Heart left ventricle (tissue), 16 donors: ENCODE measurements at regions of chr1 and their contacts with region 1.

Region 1: DNA sequence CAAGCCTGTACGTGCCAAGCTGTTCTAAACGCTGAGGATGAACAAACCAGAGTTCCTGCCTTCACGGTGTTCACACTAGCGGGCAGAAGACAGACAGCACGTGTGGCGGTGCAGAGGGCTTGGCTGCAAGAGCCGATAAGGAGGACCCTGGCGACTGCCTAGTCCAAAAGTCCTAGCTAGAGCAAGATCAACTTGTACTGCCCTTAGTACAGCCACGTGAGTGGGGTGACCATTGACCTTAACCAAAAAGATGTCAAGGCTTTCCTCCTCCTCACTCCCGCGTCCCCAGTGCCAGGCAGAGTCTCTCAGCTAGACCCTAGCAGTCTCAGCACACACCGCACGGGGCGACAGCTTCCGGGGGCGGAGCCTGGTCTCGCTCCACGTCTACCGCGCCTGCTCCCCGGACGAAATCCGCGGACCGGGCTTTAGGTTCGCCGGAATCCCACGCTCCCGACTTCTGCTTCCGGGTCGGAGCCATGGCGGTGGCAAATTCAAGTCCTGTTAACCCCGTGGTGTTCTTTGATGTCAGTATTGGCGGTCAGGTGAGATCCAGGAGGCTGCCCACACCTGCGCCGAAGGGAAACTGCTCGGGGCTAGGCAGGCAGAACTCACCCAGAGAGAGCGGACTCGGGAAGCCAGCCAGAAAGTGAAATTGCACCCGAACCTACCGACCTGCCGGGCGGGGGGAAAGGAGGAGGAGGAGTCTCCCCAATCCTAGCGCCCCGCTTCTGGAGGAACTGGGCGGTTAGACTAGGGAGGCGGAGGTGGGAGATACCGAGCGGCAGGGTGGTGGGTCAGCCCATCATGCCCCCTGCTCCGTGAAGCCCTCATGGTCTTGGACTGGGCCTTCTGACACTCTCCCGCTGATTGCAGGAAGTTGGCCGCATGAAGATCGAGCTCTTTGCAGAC is at the start of gene PPIH:
- DNase-seq: peak; percentile 94 to 97 (median 96)
- ATAC-seq: peak; percentile 99 to 100 (median 100)
- H3K4me3 ChIP-seq: peak within 1 kb of the TSS; percentile 66 to 91 (median 86)
- H3K27ac ChIP-seq: peak within 1 kb of the TSS; percentile 14 to 88 (median 76)
- H3K4me1 ChIP-seq: peaks cover 0 to 23% (median 14%) of the 10 kb centered on the region in 12 donors
- H3K27me3 ChIP-seq: no peaks in the 10 kb centered on the region
- CTCF ChIP-seq: peak in 9 of 12 donors; percentile 12 to 48 (median 31)
- POLR2A ChIP-seq: peak in 1 of 2 donors; percentile 36
- total RNA-seq, gene PPIH: 16.9 to 28.6 (median 19.4) TPM

Region 2: GRCh38 chr1:42368096-42368795 is 290.0 kb before region 1 on chr1:
- intact Hi-C with region 1: no loop called
- DNase-seq: no peak
- ATAC-seq: no peak
- H3K4me3 ChIP-seq: no peak overlapping the region
- H3K27ac ChIP-seq: no peak overlapping the region
- H3K4me1 ChIP-seq: no peaks in the 10 kb centered on the region
- H3K27me3 ChIP-seq: peaks cover 0 to 8% (median 0%) of the 10 kb centered on the region in 9 donors
- CTCF ChIP-seq: no peak
- POLR2A ChIP-seq: no peak

Region 3: DNA sequence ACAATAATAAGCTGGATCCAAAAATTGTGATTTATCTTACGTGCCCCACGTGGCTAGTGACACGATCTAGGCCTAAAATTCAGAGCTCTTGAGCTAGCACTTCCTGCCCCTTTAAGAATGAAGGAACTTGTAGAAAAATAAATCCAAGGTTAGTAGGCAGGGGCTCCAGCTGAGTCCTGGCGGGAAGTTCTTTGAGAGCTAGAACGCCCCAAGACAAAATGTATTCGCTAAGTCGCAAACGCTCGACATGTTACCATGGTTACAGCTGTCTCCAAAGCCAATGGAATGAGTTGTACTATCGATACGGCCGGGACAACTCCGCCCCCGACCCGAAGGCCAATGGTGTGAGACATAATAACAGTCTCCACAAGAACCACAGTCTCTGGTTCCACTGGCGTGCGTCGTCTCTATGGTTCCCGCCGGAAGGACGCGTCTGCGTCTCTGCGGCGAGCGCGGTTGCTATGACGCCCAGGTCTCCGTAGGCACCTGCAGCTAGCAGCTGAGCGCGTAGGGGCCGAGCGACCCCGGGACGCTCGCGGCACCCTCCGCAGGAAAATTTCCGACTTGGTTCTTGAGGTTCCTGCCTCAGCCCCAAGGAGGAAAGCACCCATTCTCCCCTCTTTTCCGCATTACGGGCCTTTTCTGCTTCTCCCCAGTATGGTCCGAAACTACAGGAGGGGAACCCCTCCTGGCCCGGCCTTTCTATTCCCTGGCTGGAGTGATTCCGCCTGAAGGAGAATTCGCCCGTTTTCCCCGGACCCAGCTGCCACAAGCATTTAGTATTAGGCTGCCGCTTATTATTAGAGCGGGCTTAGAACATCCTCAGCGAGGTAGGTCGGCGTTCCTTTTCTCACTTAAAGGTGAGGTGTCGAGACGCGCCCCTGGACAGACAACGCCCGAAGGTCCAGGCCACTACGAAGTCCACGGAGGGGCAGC is 195.1 kb before region 1 on chr1 and contains the start of gene CCDC30:
- intact Hi-C with region 1: loop called in 1 of 10 experiments (anchors 10 kb)
- DNase-seq: peak; percentile 94 to 96 (median 95)
- ATAC-seq: peak; percentile 100
- H3K4me3 ChIP-seq: peak within 1 kb of the TSS; percentile 41 to 79 (median 64)
- H3K27ac ChIP-seq: peak within 1 kb of the TSS in 4 of 12 donors; percentile 1 to 6 (median 2)
- H3K4me1 ChIP-seq: peaks cover 0 to 24% (median 12%) of the 10 kb centered on the region in 12 donors
- H3K27me3 ChIP-seq: no peaks in the 10 kb centered on the region
- CTCF ChIP-seq: no peak
- POLR2A ChIP-seq: no peak
- total RNA-seq, gene CCDC30: 0.24 to 3.8 (median 2.0) TPM

Region 4: GRCh38 chr1:42681741-42682483 is 23.7 kb after region 1 on chr1 and contains the start of gene YBX1:
- intact Hi-C with region 1: loop called in 3 of 10 experiments (anchors 1 to 2 kb)
- DNase-seq: peak; percentile 96 to 97 (median 97)
- ATAC-seq: peak; percentile 97 to 99 (median 98)
- H3K4me3 ChIP-seq: peak within 1 kb of the TSS; percentile 64 to 99 (median 85)
- H3K27ac ChIP-seq: peak within 1 kb of the TSS; percentile 86 to 100 (median 96)
- H3K4me1 ChIP-seq: peaks cover 21 to 58% (median 44%) of the 10 kb centered on the region in 12 donors
- H3K27me3 ChIP-seq: no peaks in the 10 kb centered on the region
- CTCF ChIP-seq: no peak
- POLR2A ChIP-seq: peak in 1 of 2 donors; percentile 84
- total RNA-seq, gene YBX1: 663 to 1,139 (median 788) TPM